ENCODE measurements at regions of chr21 and their contacts with region 1.

Region 1: GRCh38 chr21:39137248-39138178 is 45.7 kb downstream of the PSMG1 start:
- DNase-seq: no peak
- H3K4me3 ChIP-seq: no peak overlapping the region
- H3K4me3 Mint-ChIP-seq: no peak overlapping the region
- H3K27ac ChIP-seq: no peak overlapping the region
- H3K27ac Mint-ChIP-seq: peak overlapping the region in 1 of 7 donors; percentile 27
- H3K4me1 ChIP-seq: no peaks in the 10 kb centered on the region
- H3K4me1 Mint-ChIP-seq: no peaks in the 10 kb centered on the region
- H3K27me3 ChIP-seq: no peaks in the 10 kb centered on the region
- H3K27me3 Mint-ChIP-seq: peaks cover 0 to 2% (median 0%) of the 10 kb centered on the region in 3 donors
- CTCF ChIP-seq: no peak

Region 2: GRCh38 chr21:38505654-38506515 is 631.6 kb before region 1 on chr21:
- intact Hi-C with region 1: loop called (anchors 5 to 10 kb)
- DNase-seq: peak; percentile 47 to 73 (median 71)
- H3K4me3 ChIP-seq: peak overlapping the region in 1 of 3 experiments; percentile 72
- H3K4me3 Mint-ChIP-seq: no peak overlapping the region
- H3K27ac ChIP-seq: peak overlapping the region in 1 of 2 donors; percentile 64
- H3K27ac Mint-ChIP-seq: peak overlapping the region in 2 of 7 donors; percentile 76 to 88
- H3K4me1 ChIP-seq: peaks cover 21 to 27% of the 10 kb centered on the region in 2 donors
- H3K4me1 Mint-ChIP-seq: peaks cover 36% of the 10 kb centered on the region
- H3K27me3 ChIP-seq: no peaks in the 10 kb centered on the region
- H3K27me3 Mint-ChIP-seq: peaks cover 0 to 3% (median 2%) of the 10 kb centered on the region in 3 donors
- CTCF ChIP-seq: peak; percentile 77

Region 3: DNA sequence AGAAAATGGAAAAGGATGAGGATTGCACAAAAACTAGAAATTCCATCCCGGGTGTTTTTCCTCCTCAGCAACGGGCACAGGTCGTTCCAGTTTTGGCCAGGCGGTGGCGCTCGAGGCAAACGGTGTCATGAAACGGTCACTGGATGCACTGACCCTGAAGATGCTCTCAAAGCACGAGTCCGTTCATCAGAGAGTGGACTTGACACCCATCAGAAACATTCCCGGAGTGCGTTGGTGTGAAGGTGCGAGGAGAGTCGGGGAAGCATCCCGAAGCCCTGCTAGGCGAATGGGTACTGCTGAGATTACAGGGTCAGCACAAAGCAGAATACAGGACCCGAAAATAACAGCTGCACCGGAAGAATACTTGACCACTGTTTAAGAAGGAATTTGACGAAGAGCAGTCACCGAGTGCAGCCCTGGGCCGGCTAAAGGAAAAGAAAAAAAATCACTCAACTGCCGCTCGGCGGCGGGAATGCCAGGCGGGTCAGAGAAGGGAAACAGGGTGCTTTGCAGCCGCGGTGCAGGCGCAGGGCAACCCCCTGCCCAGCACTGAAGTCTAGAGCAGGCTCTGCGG is 403.5 kb before region 1 on chr21:
- intact Hi-C with region 1: loop called (anchors 2 to 5 kb)
- DNase-seq: peak; percentile 71 to 83 (median 79)
- H3K4me3 ChIP-seq: peak overlapping the region; percentile 32 to 79 (median 47)
- H3K4me3 Mint-ChIP-seq: peak overlapping the region; percentile 88 to 96
- H3K27ac ChIP-seq: peak overlapping the region; percentile 75 to 77
- H3K27ac Mint-ChIP-seq: peak overlapping the region; percentile 90 to 98 (median 96)
- H3K4me1 ChIP-seq: peaks cover 14 to 19% of the 10 kb centered on the region in 2 donors
- H3K4me1 Mint-ChIP-seq: peaks cover 21% of the 10 kb centered on the region
- H3K27me3 ChIP-seq: no peaks in the 10 kb centered on the region
- H3K27me3 Mint-ChIP-seq: peaks cover 0 to 4% (median 0%) of the 10 kb centered on the region in 3 donors
- CTCF ChIP-seq: peak; percentile 95